PC-9 (cell line): ENCODE measurements at regions of chr9 and their contacts with region 1.

Region 1: DNA sequence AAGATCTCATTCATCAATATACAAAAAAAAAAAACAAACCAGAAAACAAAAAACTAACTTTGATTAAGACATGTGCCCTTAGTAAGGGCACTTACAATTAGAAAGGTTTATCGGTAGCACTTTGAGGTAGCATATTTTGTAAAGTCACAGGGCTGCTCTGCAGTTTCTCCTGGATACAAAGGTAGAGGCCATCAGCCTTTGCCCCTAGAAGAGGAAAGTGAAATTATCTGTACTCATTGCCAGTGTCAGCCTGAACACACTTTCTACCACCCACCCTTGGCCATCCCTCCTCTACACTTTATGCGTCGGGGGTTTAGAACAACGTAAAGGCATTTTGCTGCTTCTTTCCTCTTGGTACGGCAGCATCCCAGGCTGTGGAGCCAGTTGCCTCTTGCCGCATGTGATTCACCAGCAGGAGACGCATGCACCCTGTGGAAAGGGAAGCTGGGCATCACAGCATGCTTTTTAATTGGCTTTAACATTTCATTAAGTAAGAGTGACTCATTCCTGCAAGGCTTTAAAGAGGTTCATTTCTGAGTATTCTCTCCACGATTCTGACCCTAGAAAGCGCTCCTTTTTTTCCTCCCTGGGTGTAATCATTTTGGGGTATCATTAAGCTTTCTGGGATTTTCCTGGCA is 84.6 kb downstream of the CEMIP2 start:
- DNase-seq: no peak
- H3K4me3 ChIP-seq: no peak overlapping the region
- H3K27ac ChIP-seq: no peak overlapping the region
- H3K4me1 ChIP-seq: peaks cover 88% of the 10 kb centered on the region
- H3K27me3 ChIP-seq: no peaks in the 10 kb centered on the region
- CTCF ChIP-seq: no peak

Region 2: GRCh38 chr9:71647094-71647591 is 36.6 kb before region 1 on chr9:
- CTCF ChIA-PET with region 1: no interaction called
- POLR2A ChIA-PET with region 1: interaction called, 25 read pairs
- intact Hi-C with region 1: no loop called
- DNase-seq: peak; percentile 32 to 45
- H3K4me3 ChIP-seq: no peak overlapping the region
- H3K27ac ChIP-seq: no peak overlapping the region
- H3K4me1 ChIP-seq: peaks cover 8% of the 10 kb centered on the region; the same call in 1 of the 2 replicates
- H3K27me3 ChIP-seq: no peaks in the 10 kb centered on the region
- CTCF ChIP-seq: no peak

Region 3: GRCh38 chr9:71663931-71664459 is 19.7 kb before region 1 on chr9:
- CTCF ChIA-PET with region 1: interaction called, 6 read pairs
- POLR2A ChIA-PET with region 1: interaction called, 3 read pairs
- intact Hi-C with region 1: loop called (anchors 1 kb)
- DNase-seq: peak in 1 of 2 experiments; percentile 45
- H3K4me3 ChIP-seq: no peak overlapping the region
- H3K27ac ChIP-seq: no peak overlapping the region
- H3K4me1 ChIP-seq: no peaks in the 10 kb centered on the region; the same call in 1 of the 2 replicates
- H3K27me3 ChIP-seq: no peaks in the 10 kb centered on the region
- CTCF ChIP-seq: no peak

Region 4: DNA sequence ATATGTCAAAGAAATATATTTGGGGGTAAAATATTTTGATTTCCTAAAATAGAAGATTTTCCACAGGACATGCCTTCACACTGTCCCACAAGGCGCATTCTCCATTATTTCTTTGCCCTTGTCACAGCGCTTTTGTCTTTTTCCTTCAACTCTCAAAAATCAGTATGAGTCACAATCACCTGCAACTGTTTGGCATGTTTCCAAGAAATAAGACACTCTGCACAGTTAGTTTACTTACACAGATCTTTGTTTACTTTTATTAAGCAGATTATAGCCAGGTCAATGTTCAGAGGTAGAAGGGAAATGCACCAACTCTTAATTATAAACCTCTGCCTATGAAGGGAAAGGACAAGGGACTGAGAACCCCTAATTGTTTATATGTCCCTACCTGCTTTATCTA is 75.1 kb after region 1 on chr9:
- CTCF ChIA-PET with region 1: no interaction called
- POLR2A ChIA-PET with region 1: no interaction called
- intact Hi-C with region 1: loop called (anchors 1 kb)
- DNase-seq: peak; percentile 37 to 92
- H3K4me3 ChIP-seq: peak overlapping the region; percentile 28; the same call in 1 of the 2 replicates
- H3K27ac ChIP-seq: peak overlapping the region; percentile 46
- H3K4me1 ChIP-seq: peaks cover 63% of the 10 kb centered on the region
- H3K27me3 ChIP-seq: no peaks in the 10 kb centered on the region
- CTCF ChIP-seq: no peak

Region 5: GRCh38 chr9:72294936-72295335 is 611.2 kb after region 1 on chr9:
- CTCF ChIA-PET with region 1: no interaction called
- POLR2A ChIA-PET with region 1: no interaction called
- intact Hi-C with region 1: no loop called
- DNase-seq: peak in 1 of 2 experiments; percentile 42
- H3K4me3 ChIP-seq: no peak overlapping the region
- H3K27ac ChIP-seq: peak overlapping the region; percentile 52
- H3K4me1 ChIP-seq: peaks cover 26% of the 10 kb centered on the region
- H3K27me3 ChIP-seq: no peaks in the 10 kb centered on the region
- CTCF ChIP-seq: no peak

Region 6: GRCh38 chr9:72661401-72662135 is 977.9 kb after region 1 on chr9:
- CTCF ChIA-PET with region 1: no interaction called
- POLR2A ChIA-PET with region 1: no interaction called
- intact Hi-C with region 1: no loop called
- DNase-seq: no peak
- H3K4me3 ChIP-seq: no peak overlapping the region
- H3K27ac ChIP-seq: no peak overlapping the region
- H3K4me1 ChIP-seq: no peaks in the 10 kb centered on the region
- H3K27me3 ChIP-seq: no peaks in the 10 kb centered on the region
- CTCF ChIP-seq: no peak